Right ventricle myocardium superior (tissue), 1 donor: ENCODE measurements at regions of chr2 and their contacts with region 1.

Region 1: GRCh38 chr2:182463760-182464159 is 36.9 kb upstream of the PDE1A start:
- DNase-seq: no peak
- ATAC-seq: peak; percentile 97

Region 2: GRCh38 chr2:182586432-182586831 is 122.7 kb after region 1 on chr2:
- intact Hi-C with region 1: loop called (anchors 10 kb)
- DNase-seq: no peak
- ATAC-seq: no peak

Region 3: GRCh38 chr2:182642328-182642727 is 178.6 kb after region 1 on chr2:
- intact Hi-C with region 1: loop called (anchors 10 kb)
- DNase-seq: peak; percentile 70
- ATAC-seq: peak; percentile 49